BJ (cell line): ENCODE measurements at regions of chr1 and their contacts with region 1.

Region 1: DNA sequence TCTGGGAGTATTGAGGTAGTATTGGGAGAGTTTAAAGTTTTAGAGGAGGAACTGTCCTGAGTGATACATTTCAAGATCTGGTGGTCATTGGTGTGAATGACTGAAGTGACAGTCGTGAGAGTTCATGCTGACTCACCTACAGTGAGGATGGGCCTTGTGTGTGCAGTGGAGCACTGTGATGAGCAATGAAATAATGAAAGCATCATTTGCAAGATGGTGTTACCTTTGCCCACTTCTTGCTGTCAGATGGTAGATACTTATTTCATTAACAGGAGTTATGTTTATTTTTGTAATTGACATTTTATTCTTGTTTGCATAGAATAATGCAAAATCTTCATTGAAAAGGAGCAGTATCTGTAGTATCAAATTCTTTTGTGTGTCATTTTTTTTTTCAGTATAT is 29.0 kb downstream of the POU2F1 start:
- DNase-seq: no peak
- H3K4me3 ChIP-seq: no peak overlapping the region
- H3K27me3 ChIP-seq: no peaks in the 10 kb centered on the region
- CTCF ChIP-seq: no peak

Region 2: GRCh38 chr1:167220537-167221125 is 29.1 kb before region 1 on chr1 and contains the start of gene POU2F1:
- CTCF ChIA-PET with region 1: no interaction called
- POLR2A ChIA-PET with region 1: interaction called, 11 read pairs
- DNase-seq: peak; percentile 85
- H3K4me3 ChIP-seq: peak within 1 kb of the TSS; percentile 93
- H3K27me3 ChIP-seq: no peaks in the 10 kb centered on the region
- CTCF ChIP-seq: peak; percentile 81
- polyA plus RNA-seq, gene POU2F1: 3.9 and 4.6 TPM in 2 replicates

Region 3: GRCh38 chr1:167387251-167387910 is 137.7 kb after region 1 on chr1:
- CTCF ChIA-PET with region 1: no interaction called
- POLR2A ChIA-PET with region 1: no interaction called
- DNase-seq: no peak
- H3K4me3 ChIP-seq: no peak overlapping the region
- H3K27me3 ChIP-seq: no peaks in the 10 kb centered on the region
- CTCF ChIP-seq: no peak